T-cell (primary cell): ENCODE measurements at regions of chr13 and their contacts with region 1.

Region 1: GRCh38 chr13:41013835-41014234 is 5.3 kb downstream of the ELF1 start:
- DNase-seq: no peak
- ATAC-seq: no peak
- H3K4me3 ChIP-seq: peak overlapping the region in 1 of 2 donors; percentile 47
- H3K4me3 Mint-ChIP-seq: peak overlapping the region; percentile 85 to 90 (median 87)
- H3K27ac ChIP-seq: peak overlapping the region; percentile 69
- H3K27ac Mint-ChIP-seq: peak overlapping the region; percentile 94 to 96
- H3K4me1 ChIP-seq: peaks cover 16 to 51% of the 10 kb centered on the region in 2 experiments
- H3K4me1 Mint-ChIP-seq: peaks cover 53 to 75% (median 56%) of the 10 kb centered on the region in 3 donors
- H3K27me3 ChIP-seq: no peaks in the 10 kb centered on the region
- H3K27me3 Mint-ChIP-seq: no peaks in the 10 kb centered on the region

Region 2: GRCh38 chr13:39835253-39835652 is 1178.6 kb before region 1 on chr13:
- CTCF ChIA-PET with region 1: no interaction called
- POLR2A ChIA-PET with region 1: interaction called in 1 of 2 experiments, 10 read pairs
- DNase-seq: no peak
- ATAC-seq: no peak
- H3K4me3 ChIP-seq: no peak overlapping the region
- H3K4me3 Mint-ChIP-seq: no peak overlapping the region
- H3K27ac ChIP-seq: no peak overlapping the region
- H3K27ac Mint-ChIP-seq: no peak overlapping the region
- H3K4me1 ChIP-seq: no peaks in the 10 kb centered on the region
- H3K4me1 Mint-ChIP-seq: peaks cover 0 to 5% (median 0%) of the 10 kb centered on the region in 3 donors
- H3K27me3 ChIP-seq: no peaks in the 10 kb centered on the region
- H3K27me3 Mint-ChIP-seq: peaks cover 0 to 4% of the 10 kb centered on the region in 2 donors

Region 3: DNA sequence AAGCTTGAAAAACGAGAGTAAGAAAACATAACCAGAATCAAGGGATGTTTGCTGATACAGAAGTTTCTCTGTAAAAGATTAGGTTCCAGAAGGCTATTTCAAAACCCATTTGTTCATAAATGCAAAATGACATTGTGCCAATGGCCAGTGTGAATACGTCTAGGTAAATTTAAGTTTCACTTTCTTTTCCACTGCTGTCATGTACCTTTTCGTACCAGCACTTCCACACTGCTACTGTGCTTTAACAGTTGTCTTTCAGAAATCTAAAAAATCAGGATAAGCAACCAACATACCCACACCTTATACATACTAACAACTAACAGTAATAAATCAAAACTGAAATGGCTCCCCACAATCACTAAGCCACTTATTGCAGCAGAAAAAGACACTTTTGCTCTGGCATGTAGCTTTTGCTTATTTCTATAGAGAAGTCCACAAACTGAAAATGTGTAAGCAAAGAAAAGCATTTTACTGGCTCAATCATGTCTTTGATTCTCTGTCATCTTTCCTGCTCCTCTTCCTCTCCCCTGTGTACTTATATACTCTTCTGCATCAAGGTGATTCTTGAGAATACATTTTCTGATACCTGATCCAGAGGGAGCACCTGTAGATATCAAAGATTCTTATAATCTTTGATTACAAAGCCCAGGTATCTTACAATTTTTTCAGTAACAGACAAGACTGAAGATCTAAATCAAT is 29.0 kb before region 1 on chr13:
- CTCF ChIA-PET with region 1: interaction called in 1 of 2 experiments, 13 read pairs
- POLR2A ChIA-PET with region 1: interaction called, 4 to 17 read pairs
- DNase-seq: peak in 1 of 35 experiments; percentile 73
- ATAC-seq: peak; percentile 39 to 54 (median 46)
- H3K4me3 ChIP-seq: peak overlapping the region; percentile 39 to 45
- H3K4me3 Mint-ChIP-seq: peak overlapping the region; percentile 79 to 96 (median 85)
- H3K27ac ChIP-seq: peak overlapping the region; percentile 94
- H3K27ac Mint-ChIP-seq: peak overlapping the region; percentile 93 to 98
- H3K4me1 ChIP-seq: peaks cover 27 to 47% of the 10 kb centered on the region in 2 experiments
- H3K4me1 Mint-ChIP-seq: peaks cover 56 to 72% (median 70%) of the 10 kb centered on the region in 3 donors
- H3K27me3 ChIP-seq: no peaks in the 10 kb centered on the region
- H3K27me3 Mint-ChIP-seq: no peaks in the 10 kb centered on the region

Region 4: DNA sequence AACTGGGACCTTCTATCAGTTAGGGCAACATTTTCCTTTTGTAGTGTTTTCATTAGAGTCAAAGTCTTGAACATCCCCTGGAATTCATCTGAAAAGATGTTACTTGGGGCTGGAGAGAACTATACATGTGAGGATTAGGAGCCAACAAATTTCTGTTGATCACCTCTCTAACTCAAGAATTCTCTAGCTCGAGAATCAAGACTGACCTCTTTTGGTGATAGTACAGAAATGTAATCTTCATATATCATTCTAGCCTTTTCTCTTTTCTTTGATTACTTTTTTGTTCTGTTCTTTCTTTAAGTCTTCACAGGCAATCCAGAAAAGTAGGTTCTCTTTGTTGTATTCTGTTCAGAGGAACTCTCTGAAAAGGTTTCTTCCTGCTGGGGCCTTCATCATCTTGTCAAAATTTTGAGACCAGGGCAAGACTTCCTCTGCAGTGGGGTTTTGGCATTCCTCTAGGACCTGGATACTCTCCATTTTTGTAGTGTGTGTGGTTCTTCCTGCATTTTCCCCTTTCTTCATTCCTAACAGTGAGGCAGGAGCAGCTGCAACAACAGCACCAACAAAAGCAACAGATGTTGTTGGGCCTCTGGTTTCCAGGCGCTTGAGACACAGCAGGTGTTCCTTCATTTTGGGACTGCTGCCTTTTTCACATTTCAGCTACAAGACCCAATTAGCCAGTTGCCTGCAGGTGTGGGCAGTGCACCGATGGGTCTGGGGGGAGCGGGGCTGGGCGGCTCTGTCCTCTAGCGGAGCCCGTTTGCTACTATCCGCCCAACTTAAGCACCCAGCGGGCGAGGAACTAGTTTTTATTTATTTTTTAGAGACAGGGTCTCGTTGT is 20.9 kb before region 1 on chr13:
- CTCF ChIA-PET with region 1: interaction called, 3 to 13 read pairs
- POLR2A ChIA-PET with region 1: interaction called, 7 to 12 read pairs
- DNase-seq: peak in 1 of 35 experiments; percentile 56
- ATAC-seq: peak; percentile 41 to 64 (median 48)
- H3K4me3 ChIP-seq: no peak overlapping the region
- H3K4me3 Mint-ChIP-seq: no peak overlapping the region
- H3K27ac ChIP-seq: peak overlapping the region; percentile 60
- H3K27ac Mint-ChIP-seq: peak overlapping the region; percentile 80 to 90
- H3K4me1 ChIP-seq: peaks cover 31 to 40% of the 10 kb centered on the region in 2 experiments
- H3K4me1 Mint-ChIP-seq: peaks cover 82 to 91% (median 88%) of the 10 kb centered on the region in 3 donors
- H3K27me3 ChIP-seq: no peaks in the 10 kb centered on the region
- H3K27me3 Mint-ChIP-seq: no peaks in the 10 kb centered on the region

Region 5: DNA sequence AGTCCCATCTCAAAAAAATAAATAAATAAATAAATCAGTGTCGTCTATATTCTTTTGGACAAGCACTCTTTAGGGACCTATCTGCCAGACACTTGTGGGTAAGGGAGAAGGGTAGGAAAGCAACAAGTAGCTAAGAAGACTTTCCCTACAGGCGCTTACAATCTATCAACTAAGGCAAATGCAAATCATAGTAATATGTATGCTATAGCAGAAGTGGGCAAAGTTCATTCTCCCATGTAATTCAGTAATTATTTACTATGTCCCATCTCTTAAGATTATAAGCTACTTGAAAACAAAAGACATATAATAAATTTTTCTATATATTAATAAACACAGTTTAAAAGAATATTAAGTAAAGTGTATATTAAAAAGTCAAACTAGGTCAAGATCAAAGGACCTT is 11.2 kb before region 1 on chr13:
- CTCF ChIA-PET with region 1: interaction called in 1 of 2 experiments, 9 read pairs
- POLR2A ChIA-PET with region 1: interaction called in 1 of 2 experiments, 16 read pairs
- DNase-seq: no peak
- ATAC-seq: no peak
- H3K4me3 ChIP-seq: no peak overlapping the region
- H3K4me3 Mint-ChIP-seq: no peak overlapping the region
- H3K27ac ChIP-seq: peak overlapping the region; percentile 44
- H3K27ac Mint-ChIP-seq: peak overlapping the region in 1 of 2 donors; percentile 90
- H3K4me1 ChIP-seq: peaks cover 29 to 68% of the 10 kb centered on the region in 2 experiments
- H3K4me1 Mint-ChIP-seq: peaks cover 77 to 83% (median 77%) of the 10 kb centered on the region in 3 donors
- H3K27me3 ChIP-seq: no peaks in the 10 kb centered on the region
- H3K27me3 Mint-ChIP-seq: no peaks in the 10 kb centered on the region